ENCODE measurements at regions of chr7 and their contacts with region 1.

Region 1: DNA sequence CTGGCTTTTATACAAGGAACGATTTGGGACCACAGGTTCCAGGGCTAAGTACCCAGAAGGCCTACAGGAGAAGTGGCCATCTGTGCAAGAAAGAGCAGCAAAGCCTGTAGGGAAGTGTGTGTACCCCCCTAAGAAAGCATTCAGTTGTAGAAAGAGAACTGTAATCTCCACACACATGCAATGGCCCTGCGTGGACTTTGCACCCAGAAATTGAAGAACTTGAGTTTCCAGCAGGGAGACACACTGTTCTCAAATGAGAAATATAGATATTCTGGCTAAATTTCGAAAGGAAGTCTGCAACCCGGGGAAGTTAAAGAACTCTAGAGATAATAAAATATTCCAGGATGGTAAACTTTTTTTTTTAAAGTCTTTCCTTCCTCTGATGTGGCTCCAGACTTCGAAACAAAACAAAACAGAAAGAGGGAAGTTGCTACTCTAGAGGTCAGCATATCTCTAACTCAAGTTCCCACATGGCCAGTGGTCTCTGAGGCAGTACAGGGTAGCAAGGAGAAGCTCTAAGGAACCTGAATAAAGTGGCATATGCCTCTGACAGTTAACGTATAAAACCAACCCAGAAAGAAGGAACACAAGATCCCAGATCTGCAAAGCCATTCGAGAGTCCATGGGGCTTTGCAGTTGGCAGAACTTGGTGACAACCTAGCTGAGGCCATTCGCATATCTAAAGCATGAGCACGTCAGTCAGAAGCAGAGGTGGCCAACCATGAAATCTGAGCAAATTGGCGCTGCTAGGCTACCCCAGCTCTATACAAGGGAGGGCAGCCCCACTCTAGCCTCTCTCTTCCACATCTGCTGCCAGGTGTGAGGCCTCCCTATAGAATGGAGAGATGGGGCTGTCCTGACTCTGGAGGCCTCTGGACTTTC is 56.6 kb downstream of the ELMO1 start:
- DNase-seq: no peak
- ATAC-seq: peak; percentile 83
- H3K4me3 Mint-ChIP-seq: peak overlapping the region; percentile 28
- H3K27ac Mint-ChIP-seq: peak overlapping the region; percentile 46
- H3K4me1 Mint-ChIP-seq: peaks cover 64% of the 10 kb centered on the region
- H3K27me3 Mint-ChIP-seq: no peaks in the 10 kb centered on the region
- CTCF ChIP-seq: no peak

Region 2: DNA sequence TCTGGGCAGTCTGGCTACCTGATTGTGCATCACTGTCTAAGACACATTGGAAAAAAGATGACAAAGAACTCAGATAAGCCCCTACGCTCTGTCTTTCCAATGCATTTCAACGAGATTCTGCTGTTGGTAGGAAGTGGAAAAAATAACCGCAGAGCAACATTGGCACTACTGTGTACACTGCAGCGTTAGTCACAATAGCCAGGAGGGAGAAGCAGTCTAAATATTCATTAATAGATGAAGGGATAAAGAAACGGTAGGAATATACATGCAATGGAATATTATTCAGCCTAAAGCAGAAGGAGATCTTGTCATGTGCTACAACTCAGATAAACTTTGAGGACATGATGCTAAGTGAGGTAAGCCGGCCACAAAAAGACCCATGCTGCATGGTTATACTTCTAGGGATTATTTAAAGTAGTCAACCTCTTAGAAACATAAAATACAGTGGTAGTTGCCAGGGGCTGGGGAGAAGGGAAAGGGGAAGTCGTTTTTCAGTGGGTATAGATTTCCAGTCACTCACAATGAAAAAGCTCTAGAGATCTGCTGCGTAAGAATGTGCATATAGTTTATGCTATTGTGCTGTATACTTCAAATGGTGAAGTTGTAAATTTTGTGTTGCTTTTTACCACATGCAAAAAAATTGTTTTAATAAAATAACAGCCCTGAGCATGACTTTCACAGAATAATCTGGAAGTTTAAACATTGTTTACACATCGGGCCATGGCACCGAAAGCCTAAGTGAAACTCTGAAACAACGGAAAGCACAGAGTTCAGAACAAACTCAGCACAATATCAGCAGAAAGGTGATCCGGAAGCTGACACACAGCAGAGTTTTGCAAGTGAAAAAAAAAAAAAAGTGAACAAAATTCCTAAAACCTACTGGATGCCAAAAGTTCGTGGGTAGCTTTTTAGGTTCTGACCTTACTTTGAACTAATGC is 16.5 kb after region 1 on chr7:
- CTCF ChIA-PET with region 1: no interaction called
- POLR2A ChIA-PET with region 1: interaction called, 4 read pairs
- intact Hi-C with region 1: loop called (anchors 2 kb)
- DNase-seq: no peak
- ATAC-seq: peak; percentile 59
- H3K4me3 Mint-ChIP-seq: peak overlapping the region; percentile 76
- H3K27ac Mint-ChIP-seq: peak overlapping the region; percentile 73
- H3K4me1 Mint-ChIP-seq: peaks cover 69% of the 10 kb centered on the region
- H3K27me3 Mint-ChIP-seq: no peaks in the 10 kb centered on the region
- CTCF ChIP-seq: no peak

Region 3: DNA sequence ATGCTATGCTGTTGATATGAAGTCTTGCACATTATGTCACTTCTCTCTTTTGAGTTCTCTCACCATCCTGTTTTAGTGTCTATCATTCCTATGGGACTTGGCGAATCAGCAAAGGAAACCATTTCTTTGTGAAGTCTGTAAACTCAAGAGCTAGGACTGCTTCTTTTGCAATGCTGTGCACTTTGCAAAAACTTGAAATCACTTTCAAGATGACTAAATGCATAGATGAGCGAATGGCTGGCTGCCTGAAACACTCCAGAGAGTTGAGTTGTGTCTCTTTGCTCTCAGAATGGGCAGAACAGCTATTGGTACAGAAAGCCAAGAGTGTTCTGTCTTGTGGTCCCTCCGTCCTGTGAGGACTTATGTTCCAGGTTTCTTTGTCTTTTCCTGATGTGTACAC is 75.0 kb after region 1 on chr7:
- CTCF ChIA-PET with region 1: no interaction called
- POLR2A ChIA-PET with region 1: no interaction called
- intact Hi-C with region 1: no loop called
- DNase-seq: no peak
- ATAC-seq: no peak
- H3K4me3 Mint-ChIP-seq: no peak overlapping the region
- H3K27ac Mint-ChIP-seq: no peak overlapping the region
- H3K4me1 Mint-ChIP-seq: no peaks in the 10 kb centered on the region
- H3K27me3 Mint-ChIP-seq: peaks cover 2% of the 10 kb centered on the region
- CTCF ChIP-seq: no peak

Measured in activated B cell treated with CpG ODN at 0.5 μM for 24 hours (primary cell).